GM12878 (cell line): ENCODE measurements at regions of chr2 and their contacts with region 1.

Region 1: DNA sequence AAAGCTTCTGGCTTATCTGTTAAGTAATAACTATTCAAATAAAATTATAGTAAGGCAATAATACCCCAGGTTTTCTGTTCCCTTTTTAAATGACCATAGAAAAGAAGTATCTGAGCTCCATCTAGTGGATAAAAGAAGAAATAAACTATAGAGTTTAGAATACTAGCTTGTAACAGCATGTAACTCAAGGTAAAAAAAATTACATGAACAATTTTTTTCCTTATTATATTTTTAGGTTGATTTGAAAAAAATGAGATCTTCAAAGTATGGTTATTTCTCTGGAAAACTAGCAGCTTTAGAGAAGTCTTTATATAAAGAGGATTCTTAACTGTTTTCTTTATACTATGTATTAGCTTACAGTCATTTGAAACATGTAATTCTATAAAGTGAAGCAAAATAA is 58.1 kb downstream of the NCKAP1 start:
- DNase-seq: no peak
- ATAC-seq: peak; percentile 90
- H3K4me3 ChIP-seq: no peak overlapping the region
- H3K27ac ChIP-seq: no peak overlapping the region
- H3K4me1 ChIP-seq: no peaks in the 10 kb centered on the region
- H3K27me3 ChIP-seq: no peaks in the 10 kb centered on the region
- CTCF ChIP-seq: peak in 2 of 3 experiments; percentile 24 to 44; a peak in 3 of 6 replicates
- EP300 ChIP-seq: no peak
- POLR2A ChIP-seq: no peak
- RAD21 ChIP-seq: peak; percentile 65

Region 2: GRCh38 chr2:182240862-182241371 is 739.2 kb before region 1 on chr2:
- CTCF ChIA-PET with region 1: interaction called, 17 read pairs
- POLR2A ChIA-PET with region 1: no interaction called
- RAD21 ChIA-PET with region 1: interaction called, 10 read pairs
- SMC1A ChIA-PET with region 1: interaction called, 8 read pairs
- in situ Hi-C with region 1: no loop called
- intact Hi-C with region 1: no loop called
- DNase-seq: peak; percentile 62
- ATAC-seq: peak; percentile 100
- H3K4me3 ChIP-seq: no peak overlapping the region
- H3K27ac ChIP-seq: no peak overlapping the region
- H3K4me1 ChIP-seq: peaks cover 5% of the 10 kb centered on the region; the same call in 1 of the 2 replicates
- H3K27me3 ChIP-seq: no peaks in the 10 kb centered on the region
- CTCF ChIP-seq: peak; percentile 57 to 70 (median 60)
- EP300 ChIP-seq: peak in 1 of 2 experiments; percentile 36; a peak in 1 of 4 replicates
- POLR2A ChIP-seq: no peak
- RAD21 ChIP-seq: peak; percentile 64

Region 3: DNA sequence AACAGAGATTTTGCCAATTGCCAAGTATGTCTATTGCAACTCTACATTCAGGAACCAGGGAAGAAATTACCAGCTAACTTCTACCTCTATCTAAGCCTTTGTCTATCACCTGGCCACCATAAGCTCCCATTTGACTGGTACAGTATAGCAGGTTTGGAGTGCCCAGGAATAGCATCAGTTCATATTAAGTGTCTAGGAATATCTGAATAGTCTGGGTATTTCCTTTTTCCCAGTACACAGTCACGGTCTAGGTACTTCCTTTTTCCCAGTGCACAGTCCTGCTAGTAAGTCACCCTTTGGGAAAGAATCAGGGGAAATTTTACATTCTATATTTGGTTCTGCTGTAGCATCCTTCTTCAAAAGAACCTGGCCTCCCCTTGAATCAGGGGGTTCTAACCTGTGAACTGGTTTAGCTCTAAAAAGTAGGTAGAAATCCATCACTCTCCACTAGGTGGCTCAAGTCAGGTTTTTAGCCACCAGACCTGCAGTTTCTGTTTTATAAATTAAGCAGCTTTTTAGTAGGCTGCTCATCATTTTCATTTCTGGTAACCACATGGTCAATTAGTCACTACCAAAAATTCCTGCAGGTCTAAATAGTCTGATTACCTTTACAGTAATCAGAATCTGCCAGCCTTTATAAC is 313.3 kb before region 1 on chr2:
- CTCF ChIA-PET with region 1: interaction called, 93 read pairs
- POLR2A ChIA-PET with region 1: no interaction called
- RAD21 ChIA-PET with region 1: interaction called, 52 read pairs
- SMC1A ChIA-PET with region 1: interaction called, 47 read pairs
- in situ Hi-C with region 1: no loop called
- intact Hi-C with region 1: loop called (anchors 1 kb)
- DNase-seq: no peak
- ATAC-seq: peak; percentile 89
- H3K4me3 ChIP-seq: no peak overlapping the region
- H3K27ac ChIP-seq: no peak overlapping the region
- H3K4me1 ChIP-seq: no peaks in the 10 kb centered on the region
- H3K27me3 ChIP-seq: peaks cover 0 to 1% of the 10 kb centered on the region in 2 experiments; a peak in 2 of 4 replicates
- CTCF ChIP-seq: peak; percentile 43 to 64 (median 55); a peak in 5 of 6 replicates
- EP300 ChIP-seq: no peak
- POLR2A ChIP-seq: no peak
- RAD21 ChIP-seq: peak; percentile 67

Region 4: GRCh38 chr2:182784777-182785176 is 195.3 kb before region 1 on chr2:
- CTCF ChIA-PET with region 1: interaction called, 17 read pairs
- POLR2A ChIA-PET with region 1: no interaction called
- RAD21 ChIA-PET with region 1: interaction called, 13 read pairs
- SMC1A ChIA-PET with region 1: interaction called, 7 read pairs
- in situ Hi-C with region 1: no loop called
- intact Hi-C with region 1: loop called (anchors 1 kb)
- DNase-seq: no peak
- ATAC-seq: peak; percentile 45
- H3K4me3 ChIP-seq: no peak overlapping the region
- H3K27ac ChIP-seq: no peak overlapping the region
- H3K4me1 ChIP-seq: no peaks in the 10 kb centered on the region
- H3K27me3 ChIP-seq: no peaks in the 10 kb centered on the region
- CTCF ChIP-seq: peak; percentile 15 to 39 (median 28); a peak in 3 of 6 replicates
- EP300 ChIP-seq: no peak
- POLR2A ChIP-seq: no peak
- RAD21 ChIP-seq: peak; percentile 59

Region 5: DNA sequence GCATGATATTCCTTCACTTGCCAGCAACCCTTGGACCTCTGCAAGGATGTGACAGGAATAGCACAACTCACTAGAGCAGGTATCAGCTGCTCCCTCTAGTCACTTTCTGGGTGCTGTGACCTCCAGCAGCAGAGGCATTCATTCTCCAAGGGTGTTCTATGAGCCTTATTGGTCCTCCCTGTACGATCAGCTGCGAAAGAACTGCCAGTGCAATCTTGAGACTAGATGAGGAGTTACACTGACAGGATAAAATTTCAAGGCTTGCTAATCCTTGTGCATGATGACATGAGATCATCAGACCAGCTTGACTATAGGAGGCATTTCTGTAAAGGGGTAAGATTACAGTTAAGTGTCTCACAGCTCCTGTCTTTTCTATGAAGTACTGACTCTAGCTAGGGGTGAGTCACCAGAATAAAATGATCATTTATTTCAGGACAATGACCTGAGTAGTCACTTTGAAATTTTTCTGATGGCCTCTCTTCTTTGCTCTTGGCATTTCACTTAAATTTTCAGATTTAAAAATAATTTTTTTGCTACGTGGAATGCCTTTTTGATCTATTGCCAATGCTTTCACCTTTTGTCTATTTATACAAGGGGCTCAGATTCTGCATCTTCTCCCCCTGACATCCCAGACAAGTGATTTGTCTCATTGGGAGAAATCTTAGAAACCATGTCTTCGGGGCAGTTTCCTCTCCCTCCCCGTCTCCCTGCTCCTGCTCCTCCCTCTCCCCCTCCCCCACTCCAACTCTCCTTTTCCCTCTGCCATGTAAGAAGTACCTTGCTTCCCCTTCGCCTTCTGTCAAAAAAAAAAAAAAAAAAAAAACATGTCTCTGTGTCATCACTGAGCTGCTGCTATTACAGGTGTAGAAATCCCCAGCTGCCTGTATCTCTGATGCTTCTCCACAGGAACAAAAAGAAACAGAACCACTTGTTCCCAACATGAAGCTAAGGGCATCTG is 64.5 kb before region 1 on chr2:
- CTCF ChIA-PET with region 1: no interaction called
- POLR2A ChIA-PET with region 1: no interaction called
- RAD21 ChIA-PET with region 1: no interaction called
- SMC1A ChIA-PET with region 1: no interaction called
- in situ Hi-C with region 1: no loop called
- intact Hi-C with region 1: no loop called
- DNase-seq: no peak
- ATAC-seq: no peak
- H3K4me3 ChIP-seq: no peak overlapping the region
- H3K27ac ChIP-seq: no peak overlapping the region
- H3K4me1 ChIP-seq: no peaks in the 10 kb centered on the region
- H3K27me3 ChIP-seq: no peaks in the 10 kb centered on the region
- CTCF ChIP-seq: no peak
- EP300 ChIP-seq: no peak
- POLR2A ChIP-seq: no peak
- RAD21 ChIP-seq: no peak

Region 6: DNA sequence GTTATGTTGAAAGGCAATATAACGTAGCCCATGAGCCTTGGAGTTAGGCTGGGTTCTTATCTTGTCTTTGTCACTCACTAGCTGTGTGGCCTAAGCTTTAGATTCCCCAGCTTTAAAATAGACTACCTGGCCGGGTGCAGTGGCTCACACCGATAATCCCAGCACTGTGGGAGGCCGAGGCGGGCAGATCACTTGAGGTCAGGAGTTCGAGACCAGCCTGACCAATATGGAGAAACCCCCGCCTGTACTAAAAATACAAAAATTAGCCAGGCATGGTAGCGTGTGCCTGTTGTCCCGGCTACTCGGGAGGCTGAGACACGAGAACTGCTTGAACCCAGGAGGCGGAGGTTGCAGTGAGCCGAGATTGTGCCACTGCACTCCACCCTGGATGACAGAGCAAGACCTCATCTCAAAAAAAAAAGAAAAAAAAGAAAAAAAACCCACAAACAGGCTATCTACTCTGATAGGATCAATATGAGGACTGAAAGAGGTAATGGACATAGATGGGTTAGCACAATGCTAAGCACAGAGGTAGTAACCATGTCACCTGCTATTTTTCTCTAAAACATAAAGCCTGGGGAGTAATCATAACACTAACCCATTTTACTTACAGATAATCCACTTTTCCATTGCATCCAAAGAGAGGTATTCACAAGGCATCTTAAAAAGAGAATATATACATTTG is 14.3 kb after region 1 on chr2:
- CTCF ChIA-PET with region 1: interaction called, 10 read pairs
- POLR2A ChIA-PET with region 1: no interaction called
- RAD21 ChIA-PET with region 1: interaction called, 4 read pairs
- SMC1A ChIA-PET with region 1: interaction called, 5 read pairs
- in situ Hi-C with region 1: no loop called
- intact Hi-C with region 1: no loop called
- DNase-seq: no peak
- ATAC-seq: no peak
- H3K4me3 ChIP-seq: no peak overlapping the region
- H3K27ac ChIP-seq: no peak overlapping the region
- H3K4me1 ChIP-seq: no peaks in the 10 kb centered on the region
- H3K27me3 ChIP-seq: no peaks in the 10 kb centered on the region
- CTCF ChIP-seq: no peak
- EP300 ChIP-seq: no peak
- POLR2A ChIP-seq: no peak
- RAD21 ChIP-seq: no peak

Region 7: GRCh38 chr2:183049420-183049819 is 69.3 kb after region 1 on chr2:
- CTCF ChIA-PET with region 1: no interaction called
- POLR2A ChIA-PET with region 1: no interaction called
- RAD21 ChIA-PET with region 1: no interaction called
- SMC1A ChIA-PET with region 1: no interaction called
- in situ Hi-C with region 1: no loop called
- intact Hi-C with region 1: no loop called
- DNase-seq: no peak
- ATAC-seq: no peak
- H3K4me3 ChIP-seq: no peak overlapping the region
- H3K27ac ChIP-seq: no peak overlapping the region
- H3K4me1 ChIP-seq: no peaks in the 10 kb centered on the region
- H3K27me3 ChIP-seq: no peaks in the 10 kb centered on the region; a peak in 1 of 4 replicates
- CTCF ChIP-seq: no peak
- EP300 ChIP-seq: no peak
- POLR2A ChIP-seq: no peak
- RAD21 ChIP-seq: no peak

Region 8: GRCh38 chr2:183214680-183215079 is 234.6 kb after region 1 on chr2:
- CTCF ChIA-PET with region 1: no interaction called
- POLR2A ChIA-PET with region 1: no interaction called
- RAD21 ChIA-PET with region 1: no interaction called
- SMC1A ChIA-PET with region 1: no interaction called
- in situ Hi-C with region 1: no loop called
- intact Hi-C with region 1: no loop called
- DNase-seq: no peak
- ATAC-seq: peak; percentile 85
- H3K4me3 ChIP-seq: no peak overlapping the region
- H3K27ac ChIP-seq: no peak overlapping the region; the same call in 1 of the 2 replicates
- H3K4me1 ChIP-seq: peaks cover 14% of the 10 kb centered on the region
- H3K27me3 ChIP-seq: no peaks in the 10 kb centered on the region
- CTCF ChIP-seq: no peak
- EP300 ChIP-seq: peak; percentile 12 to 60; a peak in 2 of 4 replicates
- POLR2A ChIP-seq: no peak
- RAD21 ChIP-seq: no peak